ENCODE measurements at regions of chr11 and their contacts with region 1.

Region 1: GRCh38 chr11:58654079-58654907 is 31.8 kb downstream of the CNTF start:
- DNase-seq: peak; percentile 91
- ATAC-seq: peak; percentile 96
- H3K4me3 ChIP-seq: no peak overlapping the region
- H3K27ac ChIP-seq: no peak overlapping the region
- H3K4me1 ChIP-seq: peaks cover 29% of the 10 kb centered on the region
- H3K27me3 ChIP-seq: no peaks in the 10 kb centered on the region
- CTCF ChIP-seq: peak; percentile 99

Region 2: DNA sequence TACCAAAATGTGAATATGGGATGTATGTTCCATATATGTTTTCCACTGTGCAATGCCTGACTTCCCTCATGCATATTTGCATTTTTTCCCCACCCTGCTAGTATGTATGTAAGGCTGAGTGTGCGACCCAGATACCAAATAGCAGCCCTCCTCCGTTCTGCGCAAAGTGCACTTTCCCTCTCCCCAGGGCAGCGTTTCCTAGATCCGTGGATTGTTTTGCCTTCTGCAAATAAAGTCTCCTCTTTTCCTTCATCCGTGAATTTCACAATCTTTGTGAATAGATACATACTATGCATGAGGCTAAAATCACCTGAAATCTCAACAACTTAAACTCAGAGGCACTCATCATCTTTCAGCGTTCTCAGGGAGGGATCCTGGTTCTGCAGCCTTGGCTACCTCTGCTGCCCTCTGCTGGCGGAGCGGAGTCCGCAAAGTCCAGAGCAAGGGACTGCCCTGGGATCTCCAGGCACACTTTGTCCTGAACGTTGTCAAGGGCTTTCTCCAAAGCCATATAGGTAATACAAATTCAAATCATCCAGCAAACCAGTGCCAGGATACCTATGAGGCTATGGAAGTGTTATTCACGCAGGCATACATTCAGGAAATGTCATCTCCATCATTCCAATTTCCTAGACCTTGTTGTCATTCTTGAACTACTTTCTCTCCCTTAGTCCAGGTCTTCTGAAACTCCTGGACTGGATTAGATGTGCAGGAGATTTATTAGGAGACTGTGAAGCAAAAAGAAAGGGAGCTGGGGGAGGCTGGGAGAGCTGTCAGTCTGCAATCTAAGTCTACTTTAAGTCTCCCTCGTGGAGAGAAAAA is 21.3 kb after region 1 on chr11:
- CTCF ChIA-PET with region 1: no interaction called
- POLR2A ChIA-PET with region 1: interaction called, 3 read pairs
- intact Hi-C with region 1: loop called (anchors 1 kb)
- DNase-seq: peak; percentile 85
- ATAC-seq: peak; percentile 98
- H3K4me3 ChIP-seq: no peak overlapping the region
- H3K27ac ChIP-seq: no peak overlapping the region
- H3K4me1 ChIP-seq: no peaks in the 10 kb centered on the region
- H3K27me3 ChIP-seq: peaks cover 9% of the 10 kb centered on the region; the same call in 1 of the 2 replicates
- CTCF ChIP-seq: peak; percentile 99

Region 3: GRCh38 chr11:58788355-58789023 is 134.2 kb after region 1 on chr11:
- CTCF ChIA-PET with region 1: no interaction called
- POLR2A ChIA-PET with region 1: no interaction called
- intact Hi-C with region 1: loop called (anchors 1 kb)
- DNase-seq: peak; percentile 91
- ATAC-seq: peak; percentile 91
- H3K4me3 ChIP-seq: no peak overlapping the region
- H3K27ac ChIP-seq: peak overlapping the region; percentile 69
- H3K4me1 ChIP-seq: peaks cover 7% of the 10 kb centered on the region
- H3K27me3 ChIP-seq: no peaks in the 10 kb centered on the region
- CTCF ChIP-seq: peak; percentile 98

Region 4: GRCh38 chr11:58900479-58901420 is 246.5 kb after region 1 on chr11:
- CTCF ChIA-PET with region 1: no interaction called
- POLR2A ChIA-PET with region 1: no interaction called
- intact Hi-C with region 1: loop called (anchors 2 kb)
- DNase-seq: peak; percentile 96
- ATAC-seq: peak; percentile 81
- H3K4me3 ChIP-seq: no peak overlapping the region
- H3K27ac ChIP-seq: no peak overlapping the region
- H3K4me1 ChIP-seq: no peaks in the 10 kb centered on the region; the same call in 1 of the 2 replicates
- H3K27me3 ChIP-seq: peaks cover 20% of the 10 kb centered on the region
- CTCF ChIP-seq: peak; percentile 90

Region 5: DNA sequence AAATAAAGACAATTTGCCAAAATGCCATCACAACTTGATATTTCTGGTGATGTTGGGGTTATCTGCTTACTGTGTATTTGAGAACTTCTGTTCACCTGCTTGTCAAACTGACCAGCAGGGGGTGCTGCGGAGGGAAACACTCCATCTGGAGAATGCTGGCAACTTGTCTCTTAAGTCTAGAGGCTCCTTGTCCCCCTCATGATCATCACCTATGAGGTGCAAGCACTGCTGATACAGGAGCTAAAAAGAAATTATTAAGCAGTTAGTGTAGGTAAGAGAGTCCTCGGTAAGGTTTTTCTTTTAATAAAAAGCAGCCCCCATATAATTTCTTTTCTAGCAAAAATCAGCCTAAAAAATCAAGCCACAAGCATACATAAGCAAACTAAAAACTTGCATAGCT is 399.1 kb after region 1 on chr11:
- CTCF ChIA-PET with region 1: no interaction called
- POLR2A ChIA-PET with region 1: no interaction called
- intact Hi-C with region 1: no loop called
- DNase-seq: peak; percentile 75
- ATAC-seq: peak; percentile 51; the same call in 1 of the 2 replicates
- H3K4me3 ChIP-seq: no peak overlapping the region
- H3K27ac ChIP-seq: no peak overlapping the region
- H3K4me1 ChIP-seq: peaks cover 7% of the 10 kb centered on the region; the same call in 1 of the 2 replicates
- H3K27me3 ChIP-seq: peaks cover 48% of the 10 kb centered on the region
- CTCF ChIP-seq: peak; percentile 85

Measured in PC-3 (cell line).